ENCODE measurements at regions of chr21 and their contacts with region 1.

Region 1: DNA sequence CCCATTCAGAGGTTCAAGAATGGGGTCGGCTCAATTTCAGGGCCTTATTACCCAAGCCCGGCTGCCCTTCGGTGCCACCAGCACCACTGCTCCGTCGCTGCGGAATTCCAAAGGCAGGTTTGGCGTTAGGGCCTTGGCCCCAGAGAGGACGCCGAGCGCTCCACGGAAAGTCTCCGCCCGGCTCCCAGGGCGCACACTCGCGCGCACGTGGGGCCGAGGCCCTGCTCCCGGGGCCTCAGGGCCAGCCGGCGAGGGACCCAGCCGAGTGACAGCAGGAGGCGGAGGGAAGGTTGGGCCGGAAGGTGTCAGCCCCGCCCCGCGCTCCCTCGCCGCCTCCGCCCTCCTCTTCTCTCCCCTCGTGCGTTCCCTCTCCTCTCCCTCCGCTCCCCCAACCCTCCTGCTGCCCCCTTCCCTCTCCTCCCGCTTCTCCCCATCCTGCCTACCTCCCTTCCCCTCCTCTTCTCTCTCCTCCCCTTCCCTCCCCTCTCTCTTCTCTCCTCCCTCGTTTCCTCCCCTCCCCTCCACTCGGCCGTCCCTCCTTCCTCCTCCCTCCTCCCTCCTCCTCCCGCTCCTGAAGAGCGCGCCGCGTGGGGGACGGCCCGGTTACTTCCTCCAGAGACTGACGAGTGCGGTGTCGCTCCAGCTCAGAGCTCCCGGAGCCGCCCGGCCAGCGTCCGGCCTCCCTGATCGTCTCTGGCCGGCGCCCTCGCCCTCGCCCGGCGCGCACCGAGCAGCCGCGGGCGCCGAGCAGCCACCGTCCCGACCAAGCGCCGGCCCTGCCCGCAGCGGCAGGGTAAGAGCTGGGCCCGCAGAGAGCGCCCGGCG is at the start of gene ETS2:
- DNase-seq: peak; percentile 86 to 94 (median 91)
- H3K4me3 ChIP-seq: peak within 1 kb of the TSS; percentile 45 to 93 (median 68)
- H3K27ac ChIP-seq: peak within 1 kb of the TSS; percentile 34 to 95 (median 90)
- H3K4me1 ChIP-seq: peaks cover 0 to 22% of the 10 kb centered on the region in 2 donors
- H3K27me3 ChIP-seq: no peaks in the 10 kb centered on the region
- CTCF ChIP-seq: peak in 1 of 6 experiments; percentile 23
- POLR2A ChIP-seq: peak; percentile 93 to 97
- total RNA-seq, gene ETS2: 15.1 to 66.8 (median 48.4) TPM

Region 2: DNA sequence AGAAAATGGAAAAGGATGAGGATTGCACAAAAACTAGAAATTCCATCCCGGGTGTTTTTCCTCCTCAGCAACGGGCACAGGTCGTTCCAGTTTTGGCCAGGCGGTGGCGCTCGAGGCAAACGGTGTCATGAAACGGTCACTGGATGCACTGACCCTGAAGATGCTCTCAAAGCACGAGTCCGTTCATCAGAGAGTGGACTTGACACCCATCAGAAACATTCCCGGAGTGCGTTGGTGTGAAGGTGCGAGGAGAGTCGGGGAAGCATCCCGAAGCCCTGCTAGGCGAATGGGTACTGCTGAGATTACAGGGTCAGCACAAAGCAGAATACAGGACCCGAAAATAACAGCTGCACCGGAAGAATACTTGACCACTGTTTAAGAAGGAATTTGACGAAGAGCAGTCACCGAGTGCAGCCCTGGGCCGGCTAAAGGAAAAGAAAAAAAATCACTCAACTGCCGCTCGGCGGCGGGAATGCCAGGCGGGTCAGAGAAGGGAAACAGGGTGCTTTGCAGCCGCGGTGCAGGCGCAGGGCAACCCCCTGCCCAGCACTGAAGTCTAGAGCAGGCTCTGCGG is 71.5 kb before region 1 on chr21:
- intact Hi-C with region 1: loop called in 1 of 2 experiments (anchors 10 kb)
- DNase-seq: peak; percentile 79 to 96 (median 87)
- H3K4me3 ChIP-seq: peak overlapping the region in 1 of 4 donors; percentile 35
- H3K27ac ChIP-seq: peak overlapping the region in 4 of 5 donors; percentile 29 to 86 (median 62)
- H3K4me1 ChIP-seq: peaks cover 0 to 6% of the 10 kb centered on the region in 2 donors
- H3K27me3 ChIP-seq: no peaks in the 10 kb centered on the region
- CTCF ChIP-seq: peak; percentile 85 to 96 (median 94)
- POLR2A ChIP-seq: no peak

Region 3: DNA sequence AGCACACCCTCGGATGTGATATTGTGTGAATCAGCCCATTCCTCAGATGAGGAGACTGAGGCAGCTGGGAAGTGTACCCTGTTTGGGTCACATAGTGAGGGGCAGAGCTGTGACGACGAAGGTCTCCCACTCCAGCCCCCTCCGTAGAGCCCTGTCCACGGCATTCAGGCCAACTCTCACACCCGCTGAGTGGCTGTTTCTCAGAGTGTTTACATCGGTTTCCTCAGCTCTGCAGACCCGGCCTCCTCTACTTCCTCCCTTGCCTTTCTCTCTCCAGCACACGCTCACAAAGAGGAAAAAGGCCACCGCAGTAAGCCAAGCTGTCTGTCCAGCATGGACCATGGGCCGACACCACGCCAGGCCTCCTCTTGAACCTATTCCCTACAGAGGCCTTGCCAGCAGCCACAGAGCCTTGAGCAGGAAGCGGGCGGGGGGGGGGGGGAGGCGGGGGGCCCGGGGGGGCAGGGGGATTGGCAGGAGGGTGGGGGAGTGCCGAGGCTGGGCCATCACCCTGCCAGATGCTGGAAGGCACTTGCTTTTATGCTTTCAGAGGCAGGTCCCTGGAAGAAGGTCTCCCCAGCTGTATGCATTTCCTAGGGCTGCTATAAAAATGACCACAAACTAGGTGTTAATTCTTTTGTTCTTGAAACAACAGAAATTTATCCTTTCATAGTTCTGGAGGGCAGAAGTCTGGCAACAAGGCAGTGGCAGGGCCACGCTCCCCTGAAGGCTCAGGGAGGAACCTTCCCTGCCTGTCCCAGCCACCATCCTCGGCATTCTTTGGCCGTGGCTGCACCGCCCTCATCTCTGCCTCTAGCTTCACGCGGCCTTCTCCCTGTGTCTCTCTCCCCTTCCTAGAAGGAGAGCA is 199.3 kb after region 1 on chr21:
- intact Hi-C with region 1: loop called in 1 of 2 experiments (anchors 10 kb)
- DNase-seq: peak in 5 of 7 donors; percentile 46 to 77 (median 59)
- H3K4me3 ChIP-seq: no peak overlapping the region
- H3K27ac ChIP-seq: peak overlapping the region in 4 of 5 donors; percentile 7 to 90 (median 66)
- H3K4me1 ChIP-seq: peaks cover 13 to 39% of the 10 kb centered on the region in 2 donors
- H3K27me3 ChIP-seq: no peaks in the 10 kb centered on the region
- CTCF ChIP-seq: no peak
- POLR2A ChIP-seq: no peak

Region 4: GRCh38 chr21:39125752-39126485 is 320.4 kb after region 1 on chr21:
- intact Hi-C with region 1: loop called (anchors 5 to 10 kb)
- DNase-seq: peak; percentile 42 to 78 (median 55)
- H3K4me3 ChIP-seq: no peak overlapping the region
- H3K27ac ChIP-seq: peak overlapping the region in 1 of 5 donors; percentile 7
- H3K4me1 ChIP-seq: no peaks in the 10 kb centered on the region
- H3K27me3 ChIP-seq: no peaks in the 10 kb centered on the region
- CTCF ChIP-seq: peak in 5 of 6 experiments; percentile 13 to 75 (median 63)
- POLR2A ChIP-seq: no peak

Measured in adrenal gland (tissue), 19 donors.